ENCODE measurements at regions of chr19 and their contacts with region 1.

Region 1: DNA sequence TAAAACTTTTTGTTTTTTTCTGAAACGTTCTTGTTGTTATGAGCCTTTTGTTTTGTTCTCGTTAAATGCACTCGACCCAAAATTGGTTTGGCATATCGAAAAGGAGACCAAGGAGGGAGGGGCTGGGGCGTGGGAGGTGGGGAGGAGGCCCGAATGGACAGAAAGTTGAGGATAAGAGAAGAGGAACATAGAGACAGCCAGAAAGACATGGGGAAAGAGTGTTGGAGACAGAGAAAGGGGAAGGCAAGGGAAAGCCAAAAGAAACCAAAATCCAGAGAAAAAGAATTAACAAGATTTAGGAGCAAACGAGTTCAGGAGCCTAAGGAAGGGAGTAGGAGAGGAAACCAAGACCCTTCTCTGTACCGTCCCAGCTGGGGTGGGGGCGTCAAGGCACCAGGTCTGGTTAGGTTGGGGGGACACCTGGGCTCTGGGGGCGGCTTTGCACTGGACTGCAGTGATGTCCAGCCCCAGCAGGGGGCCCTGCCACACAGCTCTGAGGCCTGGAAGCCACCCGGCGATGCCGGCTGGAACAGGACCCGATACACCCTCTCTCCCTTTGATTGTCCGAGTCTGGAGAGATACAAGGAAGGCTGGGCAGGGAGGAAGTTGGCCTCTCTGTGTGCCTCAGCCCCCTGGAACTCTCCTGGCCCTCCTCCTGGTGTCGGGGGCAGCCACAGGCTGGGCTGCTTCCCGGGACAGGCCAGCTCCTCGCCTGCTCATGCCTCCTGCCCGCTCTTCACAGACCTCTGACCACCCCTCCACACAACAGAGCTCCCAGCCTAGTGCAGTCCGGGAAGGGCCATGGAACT is 11.6 kb upstream of the ASF1B start:
- DNase-seq: peak; percentile 87
- H3K4me3 ChIP-seq: no peak overlapping the region
- H3K27ac ChIP-seq: peak overlapping the region; percentile 65 to 77
- H3K4me1 ChIP-seq: peaks cover 38% of the 10 kb centered on the region
- H3K27me3 ChIP-seq: no peaks in the 10 kb centered on the region
- CTCF ChIP-seq: peak; percentile 66 to 86 (median 79)
- POLR2A ChIP-seq: no peak

Region 2: GRCh38 chr19:14237014-14237941 is 89.3 kb after region 1 on chr19:
- intact Hi-C with region 1: no loop called
- DNase-seq: no peak
- H3K4me3 ChIP-seq: no peak overlapping the region
- H3K27ac ChIP-seq: no peak overlapping the region
- H3K4me1 ChIP-seq: no peaks in the 10 kb centered on the region
- H3K27me3 ChIP-seq: no peaks in the 10 kb centered on the region
- CTCF ChIP-seq: no peak
- POLR2A ChIP-seq: no peak

Region 3: DNA sequence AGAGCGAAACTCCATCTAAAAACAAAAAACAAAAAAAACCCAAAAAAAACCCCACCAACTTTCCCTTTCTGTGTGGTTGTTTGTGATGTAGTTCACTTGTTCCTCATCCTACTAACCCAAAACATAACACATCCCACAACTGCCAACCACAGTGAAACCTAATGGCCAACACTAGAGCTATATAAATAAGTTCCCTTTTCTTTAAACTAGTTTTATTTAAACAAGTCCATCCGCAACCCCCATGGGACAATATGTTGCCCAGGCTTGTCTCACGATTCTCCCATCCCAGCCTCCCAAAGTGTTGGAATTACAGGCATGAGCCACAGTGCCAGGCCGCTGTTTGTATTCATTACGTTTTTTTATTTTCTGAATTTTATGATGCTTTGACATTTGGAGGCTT is 162.1 kb after region 1 on chr19:
- intact Hi-C with region 1: no loop called
- DNase-seq: no peak
- H3K4me3 ChIP-seq: no peak overlapping the region
- H3K27ac ChIP-seq: no peak overlapping the region
- H3K4me1 ChIP-seq: no peaks in the 10 kb centered on the region
- H3K27me3 ChIP-seq: no peaks in the 10 kb centered on the region
- CTCF ChIP-seq: no peak
- POLR2A ChIP-seq: no peak

Region 4: DNA sequence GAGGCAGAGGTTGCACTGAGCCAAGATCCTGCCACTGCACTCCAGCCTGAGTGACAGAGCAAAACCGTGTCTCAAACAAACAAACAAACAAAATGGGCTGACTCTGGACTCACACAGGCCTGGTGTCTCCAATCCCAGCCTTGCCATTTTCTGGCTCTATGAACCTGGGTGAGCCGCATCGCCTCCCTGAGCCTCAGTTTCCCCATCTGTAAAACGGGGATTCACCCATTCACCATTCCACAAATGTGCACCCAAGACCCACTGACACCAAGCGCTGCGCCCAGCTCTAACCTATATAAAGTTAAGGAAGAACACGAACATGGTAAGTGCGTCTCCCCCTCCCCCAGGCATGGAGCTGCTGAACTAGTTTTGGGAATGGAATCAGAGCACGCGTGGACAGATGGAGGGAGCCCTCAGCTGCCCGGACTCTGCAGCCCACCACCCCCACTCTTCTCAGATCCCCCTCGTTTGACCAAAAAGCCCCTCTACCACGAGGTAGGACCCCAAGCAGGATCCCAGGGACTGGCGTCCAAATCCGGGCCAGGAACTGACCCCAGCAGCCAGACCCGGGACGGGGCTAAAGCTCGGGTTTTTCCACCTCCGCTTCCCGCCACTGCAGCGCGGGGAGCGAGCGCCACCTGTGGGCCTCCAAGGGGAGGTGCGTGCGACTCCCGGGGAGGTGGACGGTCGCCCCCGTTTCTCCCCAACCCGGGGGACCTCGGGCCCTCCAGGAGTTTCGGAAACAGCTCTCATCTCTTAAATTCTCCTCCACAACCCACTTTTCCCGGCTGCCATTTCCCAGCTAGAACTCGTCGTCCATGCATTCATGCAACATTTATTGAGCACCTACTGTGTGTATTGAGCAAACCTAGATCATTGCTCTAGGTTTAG is 200.2 kb after region 1 on chr19:
- intact Hi-C with region 1: loop called (anchors 5 kb)
- DNase-seq: peak; percentile 69
- H3K4me3 ChIP-seq: peak overlapping the region; percentile 22 to 38
- H3K27ac ChIP-seq: no peak overlapping the region
- H3K4me1 ChIP-seq: no peaks in the 10 kb centered on the region
- H3K27me3 ChIP-seq: no peaks in the 10 kb centered on the region
- CTCF ChIP-seq: peak; percentile 71 to 97 (median 92)
- POLR2A ChIP-seq: no peak

Measured in testis (tissue), 5 donors.